CD8-positive, alpha-beta memory T cell (primary cell): ENCODE measurements at regions of chr11 and their contacts with region 1.

Region 1: DNA sequence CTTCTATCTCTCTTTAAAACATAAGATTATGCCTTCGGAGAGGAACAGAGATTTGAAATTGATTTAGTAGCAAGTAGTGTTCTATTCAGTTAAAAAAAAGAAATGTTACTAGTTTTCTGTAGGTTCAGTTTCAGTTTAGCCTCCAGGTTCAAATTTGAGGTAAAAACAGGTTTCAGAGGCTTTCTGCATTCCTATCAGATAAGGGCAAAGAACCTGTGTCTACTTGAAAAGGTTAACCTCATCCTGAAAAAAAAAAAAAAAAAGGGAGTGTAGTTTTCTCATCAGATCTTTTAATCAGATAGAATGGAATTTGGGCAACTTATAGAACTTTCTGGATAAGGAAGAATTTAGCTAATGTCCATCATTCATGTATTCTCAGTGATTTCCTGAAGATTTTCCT is 12.1 kb downstream of the C11orf97 start:
- DNase-seq: no peak
- H3K4me3 ChIP-seq: no peak overlapping the region
- H3K4me3 Mint-ChIP-seq: no peak overlapping the region
- H3K27ac ChIP-seq: no peak overlapping the region
- H3K27ac Mint-ChIP-seq: no peak overlapping the region
- H3K4me1 ChIP-seq: no peaks in the 10 kb centered on the region
- H3K4me1 Mint-ChIP-seq: no peaks in the 10 kb centered on the region
- H3K27me3 ChIP-seq: no peaks in the 10 kb centered on the region
- H3K27me3 Mint-ChIP-seq: peaks cover 8 to 54% of the 10 kb centered on the region in 2 donors

Region 2: GRCh38 chr11:94493281-94494125 is 30.8 kb before region 1 on chr11 and contains the starts of genes ANKRD49 and MRE11:
- CTCF ChIA-PET with region 1: no interaction called
- POLR2A ChIA-PET with region 1: interaction called, 11 read pairs
- DNase-seq: peak; percentile 92 to 98 (median 97)
- H3K4me3 ChIP-seq: peak within 1 kb of the TSS; percentile 84
- H3K4me3 Mint-ChIP-seq: peak within 1 kb of the TSS; percentile 90 to 99 (median 96)
- H3K27ac ChIP-seq: peak within 1 kb of the TSS; percentile 91
- H3K27ac Mint-ChIP-seq: peak within 1 kb of the TSS; percentile 84 to 99 (median 98)
- H3K4me1 ChIP-seq: peaks cover 31% of the 10 kb centered on the region
- H3K4me1 Mint-ChIP-seq: peaks cover 47 to 66% (median 55%) of the 10 kb centered on the region in 3 donors
- H3K27me3 ChIP-seq: no peaks in the 10 kb centered on the region
- H3K27me3 Mint-ChIP-seq: no peaks in the 10 kb centered on the region
- total RNA-seq, gene ANKRD49: 21.6 to 25.9 TPM
- total RNA-seq, gene MRE11: 39.8 to 40.0 TPM

Region 3: GRCh38 chr11:94574193-94574961 is 50.0 kb after region 1 on chr11:
- CTCF ChIA-PET with region 1: no interaction called
- POLR2A ChIA-PET with region 1: no interaction called
- DNase-seq: no peak
- H3K4me3 ChIP-seq: no peak overlapping the region
- H3K4me3 Mint-ChIP-seq: no peak overlapping the region
- H3K27ac ChIP-seq: no peak overlapping the region
- H3K27ac Mint-ChIP-seq: no peak overlapping the region
- H3K4me1 ChIP-seq: no peaks in the 10 kb centered on the region
- H3K4me1 Mint-ChIP-seq: no peaks in the 10 kb centered on the region
- H3K27me3 ChIP-seq: no peaks in the 10 kb centered on the region
- H3K27me3 Mint-ChIP-seq: peaks cover 4 to 9% of the 10 kb centered on the region in 2 donors